ENCODE measurements at regions of chr3 and their contacts with region 1.

Region 1: GRCh38 chr3:58630076-58630709 is 36.4 kb downstream of the FAM3D start:
- DNase-seq: peak in 8 of 10 donors; percentile 42 to 79 (median 63)
- H3K4me3 ChIP-seq: no peak overlapping the region
- H3K27ac ChIP-seq: peak overlapping the region in 18 of 59 donors; percentile 19 to 89 (median 68)
- H3K27me3 ChIP-seq: peaks cover 0 to 5% (median 0%) of the 10 kb centered on the region in 45 donors
- CTCF ChIP-seq: peak; percentile 86 to 98 (median 95)

Region 2: DNA sequence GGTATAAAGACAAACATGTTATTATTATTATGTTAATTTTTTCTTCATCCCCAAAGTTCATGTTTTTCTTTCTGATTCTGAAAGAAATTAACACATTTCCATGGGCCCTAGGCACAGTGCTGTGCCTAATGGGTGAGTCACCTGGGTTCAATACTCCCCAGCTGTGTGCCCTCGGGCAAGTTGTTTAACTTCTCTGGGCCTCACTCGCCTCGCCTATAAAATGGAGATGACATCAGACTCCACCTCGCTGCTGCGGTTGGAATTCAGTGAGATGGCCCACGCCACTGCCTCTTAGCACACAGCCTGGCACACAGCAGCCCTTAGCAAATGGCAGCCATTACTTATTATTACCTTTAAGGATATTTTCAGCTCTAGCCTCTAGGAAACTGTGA is 442.0 kb before region 1 on chr3:
- intact Hi-C with region 1: loop called in 1 of 2 experiments (anchors 5 kb)
- DNase-seq: peak in 1 of 10 donors; percentile 26
- H3K4me3 ChIP-seq: no peak overlapping the region
- H3K27ac ChIP-seq: no peak overlapping the region
- H3K27me3 ChIP-seq: no peaks in the 10 kb centered on the region
- CTCF ChIP-seq: no peak

Region 3: DNA sequence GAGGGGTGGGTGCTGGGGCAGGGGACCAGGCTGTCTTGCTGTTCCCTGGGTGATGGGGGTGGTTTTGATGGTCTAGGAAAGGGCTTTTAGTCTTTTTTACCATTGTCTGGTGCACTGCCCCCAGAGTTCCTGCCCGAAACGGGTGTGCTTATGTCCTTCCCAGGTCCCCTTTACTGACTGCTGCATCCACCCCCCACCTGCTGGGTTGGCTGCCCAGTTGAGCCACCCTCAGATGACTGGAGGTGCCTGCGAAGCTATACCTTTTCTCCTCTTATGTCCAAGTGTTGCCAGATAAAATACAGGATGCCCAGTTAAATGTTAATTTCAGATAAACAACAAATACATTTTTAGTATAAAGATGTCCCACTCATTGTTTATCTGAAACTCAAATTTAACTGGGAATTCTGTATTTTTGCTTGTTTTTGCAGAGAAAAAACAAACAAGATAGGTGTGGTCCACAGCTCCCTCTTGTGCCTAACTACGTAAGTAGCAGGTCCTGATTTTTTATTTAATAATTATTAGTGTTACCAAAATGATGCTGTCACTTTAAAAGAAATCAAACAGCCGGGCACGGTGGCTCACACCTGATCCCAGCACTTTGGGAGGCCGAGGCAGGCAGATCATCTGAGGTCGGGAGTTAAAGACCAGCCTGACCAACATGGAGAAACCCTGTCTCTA is 330.2 kb before region 1 on chr3:
- intact Hi-C with region 1: loop called (anchors 5 kb)
- DNase-seq: no peak
- H3K4me3 ChIP-seq: peak overlapping the region in 5 of 59 donors; percentile 3 to 21 (median 11)
- H3K27ac ChIP-seq: peak overlapping the region in 48 of 59 donors; percentile 7 to 99 (median 93)
- H3K27me3 ChIP-seq: no peaks in the 10 kb centered on the region
- CTCF ChIP-seq: peak; percentile 39 to 90 (median 73)

Region 4: GRCh38 chr3:58305882-58306711 is 324.1 kb before region 1 on chr3 and contains the starts of genes HTD2 and RPP14:
- intact Hi-C with region 1: loop called (anchors 5 kb)
- DNase-seq: peak; percentile 95 to 99 (median 98)
- H3K4me3 ChIP-seq: peak within 1 kb of the TSS; percentile 59 to 98 (median 86)
- H3K27ac ChIP-seq: peak within 1 kb of the TSS; percentile 83 to 100 (median 99)
- H3K27me3 ChIP-seq: no peaks in the 10 kb centered on the region
- CTCF ChIP-seq: peak; percentile 94 to 100 (median 98)
- total RNA-seq, gene HTD2: 5.0 to 23.1 (median 11.3) TPM
- total RNA-seq, gene RPP14: 10.7 to 30.0 (median 19.1) TPM

Region 5: DNA sequence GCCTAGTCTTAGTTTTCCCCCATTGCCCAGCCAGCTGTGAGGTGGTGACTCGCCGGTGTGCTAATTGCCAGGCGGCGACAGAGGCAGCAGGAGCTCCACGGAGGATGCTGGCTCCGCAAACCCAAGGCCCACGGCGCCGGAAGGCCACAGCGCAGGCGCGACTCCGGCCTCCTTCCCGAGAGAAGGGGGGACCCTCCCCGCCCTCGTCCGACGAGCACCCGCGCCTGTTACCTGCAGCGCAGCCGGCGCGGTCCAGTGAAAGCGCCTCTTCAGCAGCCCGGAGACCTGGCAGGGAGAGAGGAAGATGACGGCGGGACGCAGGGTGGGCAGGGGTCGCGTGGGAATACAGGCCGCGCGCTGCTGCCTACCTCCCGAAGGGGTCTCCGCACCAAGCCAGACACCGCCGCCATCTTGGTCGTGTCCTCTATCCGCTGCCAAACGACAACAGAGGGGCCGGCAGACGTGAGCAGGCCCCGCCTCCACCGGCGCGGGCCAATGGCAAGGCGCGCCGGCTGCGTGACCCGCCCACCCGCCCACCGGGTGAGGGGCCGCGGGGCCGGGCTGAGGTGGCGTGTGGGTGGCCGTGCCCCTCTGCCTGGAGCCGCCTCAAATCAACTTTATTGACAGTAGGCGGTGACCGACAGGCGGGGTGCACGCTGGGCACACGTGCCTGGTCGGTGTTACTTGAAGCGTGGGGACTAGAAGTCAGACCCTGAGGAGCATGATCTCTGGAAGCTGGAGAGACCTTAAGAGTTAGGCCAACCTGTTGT is 196.6 kb before region 1 on chr3 and contains the start of gene PDHB:
- intact Hi-C with region 1: loop called in 1 of 2 experiments (anchors 10 kb)
- DNase-seq: peak; percentile 86 to 95 (median 90)
- H3K4me3 ChIP-seq: peak within 1 kb of the TSS; percentile 51 to 97 (median 82)
- H3K27ac ChIP-seq: peak within 1 kb of the TSS; percentile 81 to 100 (median 97)
- H3K27me3 ChIP-seq: no peaks in the 10 kb centered on the region
- CTCF ChIP-seq: peak in 34 of 56 donors; percentile 1 to 53 (median 27)
- total RNA-seq, gene PDHB: 33.2 to 82.3 (median 62.6) TPM

Region 6: GRCh38 chr3:58532794-58533220 is 97.4 kb before region 1 on chr3:
- intact Hi-C with region 1: no loop called
- DNase-seq: peak in 8 of 10 donors; percentile 68 to 82 (median 72)
- H3K4me3 ChIP-seq: no peak overlapping the region
- H3K27ac ChIP-seq: no peak overlapping the region
- H3K27me3 ChIP-seq: no peaks in the 10 kb centered on the region
- CTCF ChIP-seq: peak; percentile 77 to 99 (median 95)

Region 7: DNA sequence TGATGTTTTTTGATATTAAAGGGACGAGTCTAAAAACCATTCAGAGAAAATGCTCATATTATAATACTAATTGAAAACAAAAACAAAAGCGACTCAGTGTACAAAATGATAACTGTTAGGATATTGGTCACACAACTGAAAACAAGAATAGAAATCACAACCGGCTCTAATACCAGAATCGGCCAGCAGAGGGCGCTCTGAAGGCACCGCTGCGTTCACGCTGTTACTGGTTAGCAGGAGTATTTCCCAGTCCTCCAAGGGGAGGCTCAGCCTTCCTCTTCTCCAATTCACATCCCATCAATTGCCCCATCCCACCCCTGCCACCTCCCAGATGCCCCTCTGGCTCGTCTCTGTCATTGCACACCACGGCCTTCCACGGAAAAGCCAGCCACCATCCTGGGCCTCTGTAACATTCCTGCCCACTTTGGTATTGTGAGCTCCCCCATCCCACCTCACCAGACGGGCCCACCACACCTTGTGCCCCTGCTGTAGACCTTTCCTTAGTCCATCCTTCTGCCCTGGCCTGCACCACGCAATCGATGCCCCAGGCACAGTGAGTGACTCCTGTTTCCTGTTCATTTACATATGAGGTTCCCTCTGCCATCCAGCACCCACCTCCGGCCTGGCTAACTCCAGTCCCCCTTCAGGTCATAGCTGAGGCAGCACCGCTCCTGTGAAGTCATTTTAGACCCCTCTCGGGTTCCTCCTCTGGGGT is 61.5 kb before region 1 on chr3:
- intact Hi-C with region 1: loop called (anchors 1 to 5 kb)
- DNase-seq: peak; percentile 75 to 91 (median 82)
- H3K4me3 ChIP-seq: peak overlapping the region in 6 of 59 donors; percentile 4 to 13 (median 11)
- H3K27ac ChIP-seq: peak overlapping the region in 33 of 59 donors; percentile 2 to 95 (median 49)
- H3K27me3 ChIP-seq: no peaks in the 10 kb centered on the region
- CTCF ChIP-seq: peak; percentile 86 to 98 (median 94)